ENCODE measurements at regions of chr17 and their contacts with region 1.

Region 1: DNA sequence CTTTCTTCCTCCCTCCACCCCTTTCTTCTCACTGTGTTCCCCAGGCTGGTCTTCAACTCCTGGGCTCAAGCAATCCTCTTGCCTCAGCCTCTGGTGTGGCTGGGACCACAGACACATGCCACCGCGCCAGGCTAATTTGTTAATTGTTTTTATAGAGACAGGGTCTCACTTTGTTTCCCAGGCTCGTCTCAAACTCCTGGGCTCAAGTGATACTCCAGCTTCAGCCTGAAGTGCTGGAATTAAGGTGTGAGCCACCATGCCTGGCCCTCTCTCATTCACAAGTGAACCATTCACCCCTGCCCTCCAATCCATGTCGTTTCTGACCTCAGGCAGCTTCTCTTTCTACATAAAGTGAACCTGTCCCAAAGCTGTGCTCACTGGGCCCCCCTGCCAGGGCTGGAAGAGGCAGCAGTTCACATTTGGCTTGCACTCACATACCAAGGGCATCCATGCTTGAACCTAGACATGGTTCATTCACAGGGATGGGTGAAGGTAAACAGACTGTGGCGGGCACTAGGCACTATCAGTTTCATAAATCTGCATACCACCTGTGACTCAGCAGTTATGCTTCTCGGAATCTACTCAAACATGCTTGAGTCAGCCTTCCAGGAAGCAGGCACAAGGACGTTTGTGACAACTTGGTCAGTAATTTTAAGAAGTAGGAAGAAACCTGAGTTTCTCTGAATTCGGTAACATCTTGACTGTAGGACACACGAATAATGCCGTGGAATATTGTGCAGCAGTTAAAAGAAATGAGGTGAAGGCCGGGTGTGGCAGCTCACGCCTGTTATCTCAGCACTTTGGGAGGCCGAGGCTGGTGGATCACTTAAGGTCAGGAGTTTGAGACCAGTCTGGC is 6.0 kb upstream of the RNF213 start:
- DNase-seq: peak; percentile 90
- H3K4me3 Mint-ChIP-seq: peak overlapping the region; percentile 34
- H3K27ac Mint-ChIP-seq: peak overlapping the region; percentile 92
- H3K4me1 Mint-ChIP-seq: peaks cover 63% of the 10 kb centered on the region
- H3K27me3 Mint-ChIP-seq: no peaks in the 10 kb centered on the region

Region 2: DNA sequence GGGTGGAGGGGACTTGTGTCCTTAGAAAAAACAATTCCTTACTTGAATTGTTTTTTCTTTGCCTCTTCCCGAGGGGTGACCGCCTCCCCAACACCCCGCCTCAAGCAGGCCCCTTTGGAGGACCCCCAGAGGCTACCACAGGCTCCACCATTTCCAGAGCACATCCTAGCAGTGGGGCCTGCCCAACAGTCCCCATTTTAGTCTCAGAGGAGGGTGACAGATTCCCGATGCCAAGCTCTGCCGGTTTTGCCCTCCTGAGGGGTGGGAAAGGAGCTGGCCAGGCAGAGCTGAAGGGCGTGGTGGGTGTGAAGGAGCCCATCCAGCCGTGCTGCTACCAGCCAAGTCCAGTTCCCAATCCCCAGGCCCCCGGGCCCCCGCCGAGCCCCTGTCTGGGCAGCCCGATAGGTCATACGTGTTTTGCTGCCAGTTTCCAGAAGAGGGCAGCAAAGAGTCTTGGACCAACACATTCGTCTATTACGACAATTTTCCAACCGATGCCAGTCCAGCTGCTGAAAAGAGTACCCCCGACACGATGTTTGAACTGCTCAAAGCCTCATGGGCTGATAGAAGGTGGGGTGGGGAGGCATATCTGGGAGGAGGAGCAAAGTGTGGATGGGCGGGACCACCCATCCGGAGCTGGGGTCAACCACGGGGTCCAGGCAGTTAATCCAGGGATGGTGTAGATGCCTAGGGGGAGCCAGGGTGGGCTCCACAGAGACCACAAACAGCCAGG is 172.1 kb before region 1 on chr17:
- CTCF ChIA-PET with region 1: interaction called, 7 read pairs
- intact Hi-C with region 1: loop called (anchors 5 kb)
- DNase-seq: peak; percentile 76
- H3K4me3 Mint-ChIP-seq: no peak overlapping the region
- H3K27ac Mint-ChIP-seq: no peak overlapping the region
- H3K4me1 Mint-ChIP-seq: peaks cover 3% of the 10 kb centered on the region
- H3K27me3 Mint-ChIP-seq: no peaks in the 10 kb centered on the region

Region 3: GRCh38 chr17:80129003-80129565 is 125.5 kb before region 1 on chr17:
- CTCF ChIA-PET with region 1: no interaction called
- intact Hi-C with region 1: no loop called
- DNase-seq: no peak
- H3K4me3 Mint-ChIP-seq: no peak overlapping the region
- H3K27ac Mint-ChIP-seq: no peak overlapping the region
- H3K4me1 Mint-ChIP-seq: no peaks in the 10 kb centered on the region
- H3K27me3 Mint-ChIP-seq: peaks cover 5% of the 10 kb centered on the region

Region 4: GRCh38 chr17:80147035-80147836 is 107.4 kb before region 1 on chr17 and contains the start of gene EIF4A3:
- CTCF ChIA-PET with region 1: interaction called, 4 read pairs
- intact Hi-C with region 1: loop called (anchors 1 kb)
- DNase-seq: peak; percentile 99
- H3K4me3 Mint-ChIP-seq: peak within 1 kb of the TSS; percentile 94
- H3K27ac Mint-ChIP-seq: peak within 1 kb of the TSS; percentile 89
- H3K4me1 Mint-ChIP-seq: peaks cover 42% of the 10 kb centered on the region
- H3K27me3 Mint-ChIP-seq: no peaks in the 10 kb centered on the region
- total RNA-seq, gene EIF4A3: 92.1 to 97.7 TPM

Region 5: GRCh38 chr17:80219013-80219762 is 35.4 kb before region 1 on chr17:
- CTCF ChIA-PET with region 1: interaction called, 3 read pairs
- intact Hi-C with region 1: loop called (anchors 1 kb)
- DNase-seq: peak; percentile 97
- H3K4me3 Mint-ChIP-seq: peak overlapping the region; percentile 88
- H3K27ac Mint-ChIP-seq: peak overlapping the region; percentile 88
- H3K4me1 Mint-ChIP-seq: peaks cover 19% of the 10 kb centered on the region
- H3K27me3 Mint-ChIP-seq: no peaks in the 10 kb centered on the region

Region 6: DNA sequence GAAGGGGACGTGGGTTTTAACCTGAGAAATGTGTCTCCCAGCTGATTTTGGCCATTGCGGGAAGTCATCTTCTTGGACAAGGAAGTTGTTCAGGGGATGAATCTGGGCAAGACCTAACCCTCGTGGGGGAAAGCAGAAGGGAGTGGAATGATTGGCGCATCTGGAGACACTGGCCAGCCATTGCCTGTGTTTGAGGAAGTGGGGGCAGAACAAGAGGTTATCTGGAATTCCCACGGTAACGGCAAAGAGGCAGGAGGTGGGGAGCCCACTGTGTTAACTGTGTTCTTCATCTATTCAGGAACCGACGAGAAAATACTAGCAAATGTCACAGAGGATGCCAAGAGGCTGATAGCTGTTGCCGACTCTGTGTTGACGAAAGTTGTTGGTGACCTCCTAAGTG is 72.9 kb after region 1 on chr17:
- CTCF ChIA-PET with region 1: no interaction called
- intact Hi-C with region 1: no loop called
- DNase-seq: no peak
- H3K4me3 Mint-ChIP-seq: no peak overlapping the region
- H3K27ac Mint-ChIP-seq: peak overlapping the region; percentile 62
- H3K4me1 Mint-ChIP-seq: peaks cover 5% of the 10 kb centered on the region
- H3K27me3 Mint-ChIP-seq: no peaks in the 10 kb centered on the region

Region 7: DNA sequence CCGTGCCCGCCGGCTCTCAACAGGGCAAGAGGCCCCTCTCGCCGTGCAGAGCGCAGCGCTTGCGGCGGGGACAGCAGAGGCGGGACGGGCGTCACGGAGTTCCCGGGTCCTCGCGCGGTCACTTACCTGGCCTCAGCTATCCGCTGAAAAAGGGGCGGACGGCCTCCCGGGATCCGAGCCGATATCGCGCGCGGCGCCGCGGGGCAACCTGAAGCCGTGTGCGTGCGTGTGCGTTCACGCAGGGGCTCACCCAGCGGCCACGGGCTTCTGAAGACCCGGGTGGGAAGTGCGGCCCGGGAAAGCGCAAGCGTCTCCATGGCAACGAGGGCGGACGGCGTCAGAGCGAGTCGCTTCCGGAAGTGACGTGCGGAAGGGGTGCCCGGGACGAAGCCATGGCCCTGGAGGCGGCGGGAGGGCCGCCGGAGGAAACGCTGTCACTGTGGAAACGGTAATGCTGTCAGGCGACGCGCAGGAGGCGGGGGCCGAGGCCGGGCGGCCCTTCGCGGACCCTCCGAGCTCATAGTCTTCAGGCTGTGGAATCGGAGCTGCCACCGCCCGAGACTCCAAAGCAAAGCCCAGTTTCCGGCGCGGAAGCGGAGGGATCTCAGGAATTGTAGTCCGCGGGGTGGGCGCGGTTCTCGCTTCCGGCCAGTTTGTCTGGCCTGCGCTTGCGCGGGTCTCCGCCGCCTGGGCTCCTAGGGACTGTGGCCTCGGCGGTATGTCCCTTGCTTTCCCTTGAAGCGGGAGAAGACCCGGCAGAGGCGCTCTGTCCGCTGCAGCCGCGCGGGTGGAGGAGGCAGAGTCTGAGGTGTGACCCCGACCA is 160.4 kb after region 1 on chr17 and contains the start of gene ENDOV:
- CTCF ChIA-PET with region 1: no interaction called
- intact Hi-C with region 1: no loop called
- DNase-seq: peak; percentile 93
- H3K4me3 Mint-ChIP-seq: peak within 1 kb of the TSS; percentile 83
- H3K27ac Mint-ChIP-seq: no peak within 1 kb of the TSS
- H3K4me1 Mint-ChIP-seq: peaks cover 20% of the 10 kb centered on the region
- H3K27me3 Mint-ChIP-seq: peaks cover 9% of the 10 kb centered on the region
- total RNA-seq, gene ENDOV: 9.0 to 11.7 TPM

Measured in activated naive CD4-positive, alpha-beta T cell treated with anti-CD3 and anti-CD28 coated beads for 36 hours (primary cell).